ENCODE measurements at regions of chr7 and their contacts with region 1.

Region 1: DNA sequence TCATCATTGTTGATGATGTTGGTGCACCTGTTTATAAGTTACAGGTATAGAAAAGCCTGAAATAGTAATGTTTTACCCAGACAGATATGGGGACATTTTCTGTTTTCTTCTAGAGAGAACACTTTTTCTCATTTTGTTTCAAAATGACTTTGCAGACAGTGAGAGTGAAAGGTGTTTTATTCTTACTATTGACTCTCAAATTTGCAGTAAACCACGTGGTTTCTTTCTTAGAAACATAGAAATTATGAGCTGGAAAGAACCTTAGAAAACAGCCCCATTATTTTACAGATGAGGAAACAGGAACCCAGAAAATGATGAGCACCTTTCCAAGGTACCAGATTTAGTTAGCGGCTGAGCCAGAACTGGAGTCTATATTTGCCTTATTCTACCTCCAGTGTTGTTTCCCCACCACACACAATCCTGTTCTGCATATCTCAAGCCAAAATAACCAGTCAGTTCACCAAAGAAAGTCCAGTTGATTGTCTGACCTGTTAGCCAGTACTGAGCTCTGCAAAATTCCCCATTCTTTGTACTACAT is 138.9 kb upstream of the AHR start:
- DNase-seq: peak; percentile 24
- ATAC-seq: peak; percentile 90
- H3K4me3 Mint-ChIP-seq: peak overlapping the region; percentile 0
- H3K27ac Mint-ChIP-seq: peak overlapping the region; percentile 55
- H3K4me1 Mint-ChIP-seq: peaks cover 40% of the 10 kb centered on the region
- H3K27me3 Mint-ChIP-seq: peaks cover 4% of the 10 kb centered on the region

Region 2: DNA sequence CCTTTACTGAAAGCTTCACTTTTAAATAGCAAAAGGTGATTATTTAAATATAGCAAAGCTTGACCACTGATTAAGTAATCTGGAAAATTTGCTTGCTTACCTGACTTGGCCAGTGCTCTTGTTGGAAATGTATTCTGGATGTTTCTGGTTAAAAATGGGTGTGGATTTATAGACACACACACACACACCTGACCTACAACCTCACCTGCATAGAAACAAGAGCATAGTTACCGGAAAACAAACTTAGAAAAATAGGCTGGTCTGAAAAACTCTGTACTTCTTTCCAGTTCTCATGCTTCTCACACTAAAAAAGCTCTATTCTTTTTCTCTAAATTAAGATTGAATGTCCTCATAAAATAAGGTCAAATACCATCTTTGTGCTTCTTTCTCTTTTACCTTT is 277.7 kb before region 1 on chr7 and contains the start of gene AGR3:
- CTCF ChIA-PET with region 1: no interaction called
- POLR2A ChIA-PET with region 1: no interaction called
- intact Hi-C with region 1: no loop called
- DNase-seq: no peak
- ATAC-seq: no peak
- H3K4me3 Mint-ChIP-seq: no peak within 1 kb of the TSS
- H3K27ac Mint-ChIP-seq: no peak within 1 kb of the TSS
- H3K4me1 Mint-ChIP-seq: no peaks in the 10 kb centered on the region
- H3K27me3 Mint-ChIP-seq: no peaks in the 10 kb centered on the region
- total RNA-seq, gene AGR3: not detected

Region 3: GRCh38 chr7:17139081-17139480 is 20.5 kb before region 1 on chr7:
- CTCF ChIA-PET with region 1: interaction called, 15 read pairs
- POLR2A ChIA-PET with region 1: no interaction called
- intact Hi-C with region 1: loop called (anchors 1 kb)
- DNase-seq: no peak
- ATAC-seq: peak; percentile 83
- H3K4me3 Mint-ChIP-seq: no peak overlapping the region
- H3K27ac Mint-ChIP-seq: peak overlapping the region; percentile 91
- H3K4me1 Mint-ChIP-seq: peaks cover 74% of the 10 kb centered on the region
- H3K27me3 Mint-ChIP-seq: no peaks in the 10 kb centered on the region

Region 4: DNA sequence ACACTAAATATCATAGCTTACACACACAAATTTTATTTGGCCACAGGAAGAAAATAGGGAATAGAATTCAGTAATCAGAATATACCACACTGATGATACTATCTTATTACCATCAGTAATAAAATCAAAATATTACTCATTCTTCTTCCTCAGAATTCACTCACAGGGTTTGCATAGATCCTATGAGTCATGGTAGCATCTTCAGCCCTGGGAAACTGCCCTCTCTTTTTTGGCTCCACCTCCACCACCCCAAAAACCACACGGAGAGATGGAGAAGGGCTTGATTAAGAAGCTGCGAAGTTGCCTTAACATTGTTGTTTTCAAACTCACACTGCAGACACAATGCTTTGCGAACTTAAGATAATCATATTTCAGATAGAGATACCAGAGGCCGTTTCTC is 15.2 kb before region 1 on chr7:
- CTCF ChIA-PET with region 1: interaction called, 15 read pairs
- POLR2A ChIA-PET with region 1: no interaction called
- intact Hi-C with region 1: loop called (anchors 1 kb)
- DNase-seq: peak; percentile 79
- ATAC-seq: peak; percentile 88
- H3K4me3 Mint-ChIP-seq: peak overlapping the region; percentile 53
- H3K27ac Mint-ChIP-seq: peak overlapping the region; percentile 83
- H3K4me1 Mint-ChIP-seq: peaks cover 51% of the 10 kb centered on the region
- H3K27me3 Mint-ChIP-seq: peaks cover 2% of the 10 kb centered on the region

Region 5: GRCh38 chr7:17608114-17608833 is 448.7 kb after region 1 on chr7:
- CTCF ChIA-PET with region 1: no interaction called
- POLR2A ChIA-PET with region 1: no interaction called
- intact Hi-C with region 1: no loop called
- DNase-seq: no peak
- ATAC-seq: no peak
- H3K4me3 Mint-ChIP-seq: no peak overlapping the region
- H3K27ac Mint-ChIP-seq: no peak overlapping the region
- H3K4me1 Mint-ChIP-seq: no peaks in the 10 kb centered on the region
- H3K27me3 Mint-ChIP-seq: peaks cover 8% of the 10 kb centered on the region